ENCODE measurements at regions of chr6 and their contacts with region 1.

Region 1: GRCh38 chr6:109073344-109074132 is 21.1 kb downstream of the SESN1 start:
- DNase-seq: no peak
- H3K4me3 ChIP-seq: no peak overlapping the region
- H3K27ac ChIP-seq: no peak overlapping the region
- H3K4me1 ChIP-seq: peaks cover 0 to 26% (median 2%) of the 10 kb centered on the region in 3 donors
- H3K27me3 ChIP-seq: no peaks in the 10 kb centered on the region
- CTCF ChIP-seq: peak; percentile 40 to 72 (median 58)
- POLR2A ChIP-seq: no peak

Region 2: DNA sequence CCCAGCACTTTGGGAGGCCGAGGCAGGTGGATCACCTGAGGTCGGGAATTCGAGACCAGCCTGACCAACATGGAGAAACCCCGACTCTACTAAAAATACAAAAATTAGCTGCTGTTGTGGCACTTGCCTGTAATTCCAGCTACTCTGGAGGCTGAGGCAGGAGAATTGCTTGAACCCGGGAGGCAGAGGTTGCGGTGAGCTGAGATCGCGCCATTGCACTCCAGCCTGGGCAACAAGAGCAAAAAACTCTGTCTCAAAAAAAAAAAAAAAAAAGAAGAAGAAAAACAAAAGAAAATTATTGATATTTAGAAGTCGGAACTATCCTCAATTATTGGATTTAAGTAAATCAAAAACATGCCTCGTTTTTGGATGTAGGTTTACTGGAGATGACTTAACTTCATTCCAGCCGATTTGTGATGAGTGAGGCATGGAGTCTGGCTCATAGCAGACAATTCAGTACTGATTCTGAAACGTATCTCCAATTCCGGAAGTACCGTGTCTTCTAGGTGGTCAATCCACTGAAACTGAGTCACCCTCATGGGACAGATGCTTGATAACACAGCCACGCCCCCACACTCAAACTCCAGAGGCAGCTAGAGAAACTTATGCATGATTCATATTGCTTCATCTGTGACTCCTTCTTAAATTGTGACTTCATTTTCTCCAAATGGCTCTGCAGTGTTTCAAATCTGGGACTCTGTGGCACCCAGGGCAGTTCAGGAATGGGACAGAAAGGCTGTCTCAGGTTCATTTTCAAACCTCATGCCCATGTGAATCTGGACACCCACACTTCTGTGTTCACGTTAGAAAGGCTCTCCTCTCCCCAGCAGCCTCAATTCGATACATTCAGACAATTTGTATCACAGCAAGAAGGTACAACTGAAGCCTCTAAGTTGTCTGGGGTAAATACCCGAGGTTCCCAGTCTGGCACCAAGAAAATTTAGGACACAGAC is 335.7 kb before region 1 on chr6:
- intact Hi-C with region 1: no loop called
- DNase-seq: no peak
- H3K4me3 ChIP-seq: no peak overlapping the region
- H3K27ac ChIP-seq: peak overlapping the region in 2 of 4 donors; percentile 25 to 56
- H3K4me1 ChIP-seq: peaks cover 0 to 43% (median 13%) of the 10 kb centered on the region in 3 donors
- H3K27me3 ChIP-seq: no peaks in the 10 kb centered on the region
- CTCF ChIP-seq: no peak
- POLR2A ChIP-seq: no peak

Region 3: GRCh38 chr6:108914235-108915022 is 159.1 kb before region 1 on chr6:
- intact Hi-C with region 1: loop called (anchors 10 kb)
- DNase-seq: no peak
- H3K4me3 ChIP-seq: no peak overlapping the region
- H3K27ac ChIP-seq: peak overlapping the region in 3 of 4 donors; percentile 32 to 62 (median 61)
- H3K4me1 ChIP-seq: peaks cover 0 to 7% (median 4%) of the 10 kb centered on the region in 3 donors
- H3K27me3 ChIP-seq: no peaks in the 10 kb centered on the region
- CTCF ChIP-seq: peak in 4 of 6 experiments; percentile 13 to 46 (median 36)
- POLR2A ChIP-seq: no peak

Region 4: GRCh38 chr6:109229536-109229935 is 156.0 kb after region 1 on chr6:
- intact Hi-C with region 1: no loop called
- DNase-seq: no peak
- H3K4me3 ChIP-seq: no peak overlapping the region
- H3K27ac ChIP-seq: peak overlapping the region in 2 of 4 donors; percentile 13 to 51
- H3K4me1 ChIP-seq: peaks cover 0 to 9% (median 4%) of the 10 kb centered on the region in 3 donors
- H3K27me3 ChIP-seq: no peaks in the 10 kb centered on the region
- CTCF ChIP-seq: no peak
- POLR2A ChIP-seq: no peak

Measured in esophagus squamous epithelium (tissue), 5 donors.